Posterior cingulate gyrus (tissue), 11 donors: ENCODE measurements at regions of chr22 and their contacts with region 1.

Region 1: GRCh38 chr22:39773976-39774539 is 119.5 kb downstream of the ENTHD1 start:
- DNase-seq: no peak

Region 2: DNA sequence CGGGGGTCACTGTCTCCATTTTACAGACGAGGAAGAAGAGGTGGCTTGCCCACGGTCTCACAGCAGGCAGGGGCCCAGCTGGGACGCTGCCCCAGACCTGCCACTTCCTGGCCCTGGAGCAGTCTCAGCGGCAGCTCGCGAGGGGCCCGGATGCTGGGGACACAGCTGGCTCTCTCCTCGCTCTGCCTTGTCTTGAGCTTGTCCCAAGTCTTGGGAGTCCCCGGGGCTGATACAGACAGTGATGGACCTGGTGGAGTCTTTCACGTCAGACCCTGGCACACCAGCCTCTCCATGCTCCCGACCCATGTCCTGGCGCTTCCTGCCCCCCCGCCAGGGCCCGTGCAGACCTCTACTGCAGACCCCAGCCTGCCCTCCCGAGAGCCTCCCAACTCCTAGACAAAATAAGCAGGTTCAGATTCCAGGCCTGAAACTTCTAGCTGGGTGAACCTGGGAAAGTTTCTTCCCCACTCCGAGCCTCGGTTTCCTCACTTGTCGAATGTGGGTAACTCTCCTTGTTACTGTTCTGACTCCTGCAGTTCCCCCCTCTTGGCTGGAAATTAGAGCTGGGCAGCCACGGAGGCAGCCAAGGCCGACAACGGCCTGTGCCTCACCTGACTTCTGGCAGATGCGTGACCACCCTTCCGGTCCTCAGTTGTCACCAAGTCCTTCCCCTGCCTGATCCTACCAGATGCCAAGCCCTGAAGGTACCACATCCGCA is 58.1 kb before region 1 on chr22:
- intact Hi-C with region 1: loop called (anchors 2 kb)
- DNase-seq: peak in 3 of 10 donors; percentile 10 to 80 (median 55)

Region 3: DNA sequence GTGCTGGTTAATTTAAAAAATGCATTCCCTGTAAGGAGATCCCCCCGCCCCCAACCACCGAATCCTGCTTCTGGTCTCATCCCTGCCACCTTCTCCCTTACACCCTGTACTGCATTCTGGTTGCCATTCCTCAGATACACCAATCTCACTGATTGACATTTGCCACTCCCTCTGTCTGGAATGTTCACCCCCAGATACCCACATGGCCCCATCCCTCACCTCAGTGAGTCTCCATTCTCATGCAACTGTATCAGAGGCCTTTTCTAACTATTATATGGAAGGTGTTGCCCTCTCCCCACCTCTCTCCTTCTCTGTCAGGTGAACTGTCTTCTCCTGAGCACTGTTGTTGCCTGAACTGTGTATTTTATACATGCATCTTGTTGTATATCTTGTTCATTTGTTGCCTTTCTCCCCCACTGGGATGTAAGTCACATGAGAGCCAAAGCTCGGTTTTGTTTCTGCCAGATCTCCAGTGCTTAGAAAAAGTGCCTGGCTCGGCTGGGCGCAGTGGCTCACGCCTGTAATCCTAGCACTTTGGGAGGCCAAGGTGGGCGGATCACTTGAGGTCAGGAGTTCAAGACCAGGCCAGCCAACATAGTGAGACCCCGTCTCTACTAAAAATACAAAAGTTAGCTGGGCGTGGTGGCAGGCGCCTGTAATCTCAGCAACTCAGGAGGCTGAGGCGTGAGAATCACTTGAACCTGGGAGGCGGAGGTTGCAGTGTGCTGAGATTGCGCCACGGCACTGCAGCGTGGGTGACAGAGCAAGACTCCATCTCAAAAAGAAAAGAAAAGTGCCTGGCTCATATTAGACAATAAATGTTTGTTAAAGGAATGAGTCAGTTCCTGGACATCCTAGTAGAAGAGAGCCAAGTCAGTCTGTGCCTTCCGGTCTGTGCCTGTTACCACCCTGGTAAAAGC is 464.6 kb after region 1 on chr22:
- intact Hi-C with region 1: no loop called
- DNase-seq: no peak